Activated naive CD4-positive, alpha-beta T cell treated with anti-CD3 and anti-CD28 coated beads for 36 hours (primary cell): ENCODE measurements at regions of chr1 and their contacts with region 1.

Region 1: GRCh38 chr1:226186124-226187018 is at the start of gene ACBD3:
- DNase-seq: peak; percentile 91
- H3K4me3 Mint-ChIP-seq: peak within 1 kb of the TSS; percentile 89
- H3K27ac Mint-ChIP-seq: peak within 1 kb of the TSS; percentile 87
- H3K4me1 Mint-ChIP-seq: peaks cover 34% of the 10 kb centered on the region
- H3K27me3 Mint-ChIP-seq: no peaks in the 10 kb centered on the region
- total RNA-seq, gene ACBD3: 15.0 to 15.7 TPM

Region 2: GRCh38 chr1:225923692-225924555 is 262.4 kb before region 1 on chr1 and contains the start of gene PYCR2:
- CTCF ChIA-PET with region 1: no interaction called
- intact Hi-C with region 1: loop called (anchors 5 kb)
- DNase-seq: peak; percentile 96
- H3K4me3 Mint-ChIP-seq: peak within 1 kb of the TSS; percentile 95
- H3K27ac Mint-ChIP-seq: peak within 1 kb of the TSS; percentile 90
- H3K4me1 Mint-ChIP-seq: peaks cover 59% of the 10 kb centered on the region
- H3K27me3 Mint-ChIP-seq: no peaks in the 10 kb centered on the region
- total RNA-seq, gene PYCR2: 143 to 149 TPM

Region 3: GRCh38 chr1:226308723-226309315 is 122.4 kb after region 1 on chr1 and contains the start of gene LIN9:
- CTCF ChIA-PET with region 1: no interaction called
- intact Hi-C with region 1: loop called (anchors 1 kb)
- DNase-seq: peak; percentile 96
- H3K4me3 Mint-ChIP-seq: peak within 1 kb of the TSS; percentile 91
- H3K27ac Mint-ChIP-seq: peak within 1 kb of the TSS; percentile 82
- H3K4me1 Mint-ChIP-seq: peaks cover 16% of the 10 kb centered on the region
- H3K27me3 Mint-ChIP-seq: peaks cover 16% of the 10 kb centered on the region
- total RNA-seq, gene LIN9: 7.7 to 9.5 TPM